HepG2 (cell line): ENCODE measurements at regions of chr4 and their contacts with region 1.

Region 1: GRCh38 chr4:123649645-123650391 is 253.2 kb downstream of the SPRY1 start:
- DNase-seq: peak; percentile 92
- ATAC-seq: peak; percentile 97
- H3K4me3 ChIP-seq: peak overlapping the region; percentile 23 to 60 (median 47); a peak in 4 of 6 replicates
- H3K27ac ChIP-seq: peak overlapping the region; percentile 92
- H3K4me1 ChIP-seq: peaks cover 60% of the 10 kb centered on the region
- H3K27me3 ChIP-seq: no peaks in the 10 kb centered on the region
- CTCF ChIP-seq: no peak
- EP300 ChIP-seq: peak; percentile 58 to 73
- POLR2A ChIP-seq: peak; percentile 45 to 92; a peak in 3 of 4 replicates
- RAD21 ChIP-seq: no peak

Region 2: GRCh38 chr4:123599920-123600810 is 49.7 kb before region 1 on chr4:
- CTCF ChIA-PET with region 1: no interaction called
- POLR2A ChIA-PET with region 1: interaction called, 11 read pairs
- in situ Hi-C with region 1: no loop called
- intact Hi-C with region 1: loop called (anchors 1 kb)
- DNase-seq: peak; percentile 98
- ATAC-seq: peak; percentile 92
- H3K4me3 ChIP-seq: peak overlapping the region in 2 of 3 experiments; percentile 34 to 42; a peak in 2 of 6 replicates
- H3K27ac ChIP-seq: peak overlapping the region; percentile 78
- H3K4me1 ChIP-seq: peaks cover 42% of the 10 kb centered on the region
- H3K27me3 ChIP-seq: no peaks in the 10 kb centered on the region
- CTCF ChIP-seq: 0 out of 2 replicates have a peak, but pooled peaks have one; percentile 15
- EP300 ChIP-seq: peak; percentile 83 to 96; a peak in 3 of 4 replicates
- POLR2A ChIP-seq: peak in 1 of 2 experiments; percentile 69; a peak in 2 of 4 replicates
- RAD21 ChIP-seq: no peak